ENCODE measurements at regions of chr9 and their contacts with region 1.

Region 1: DNA sequence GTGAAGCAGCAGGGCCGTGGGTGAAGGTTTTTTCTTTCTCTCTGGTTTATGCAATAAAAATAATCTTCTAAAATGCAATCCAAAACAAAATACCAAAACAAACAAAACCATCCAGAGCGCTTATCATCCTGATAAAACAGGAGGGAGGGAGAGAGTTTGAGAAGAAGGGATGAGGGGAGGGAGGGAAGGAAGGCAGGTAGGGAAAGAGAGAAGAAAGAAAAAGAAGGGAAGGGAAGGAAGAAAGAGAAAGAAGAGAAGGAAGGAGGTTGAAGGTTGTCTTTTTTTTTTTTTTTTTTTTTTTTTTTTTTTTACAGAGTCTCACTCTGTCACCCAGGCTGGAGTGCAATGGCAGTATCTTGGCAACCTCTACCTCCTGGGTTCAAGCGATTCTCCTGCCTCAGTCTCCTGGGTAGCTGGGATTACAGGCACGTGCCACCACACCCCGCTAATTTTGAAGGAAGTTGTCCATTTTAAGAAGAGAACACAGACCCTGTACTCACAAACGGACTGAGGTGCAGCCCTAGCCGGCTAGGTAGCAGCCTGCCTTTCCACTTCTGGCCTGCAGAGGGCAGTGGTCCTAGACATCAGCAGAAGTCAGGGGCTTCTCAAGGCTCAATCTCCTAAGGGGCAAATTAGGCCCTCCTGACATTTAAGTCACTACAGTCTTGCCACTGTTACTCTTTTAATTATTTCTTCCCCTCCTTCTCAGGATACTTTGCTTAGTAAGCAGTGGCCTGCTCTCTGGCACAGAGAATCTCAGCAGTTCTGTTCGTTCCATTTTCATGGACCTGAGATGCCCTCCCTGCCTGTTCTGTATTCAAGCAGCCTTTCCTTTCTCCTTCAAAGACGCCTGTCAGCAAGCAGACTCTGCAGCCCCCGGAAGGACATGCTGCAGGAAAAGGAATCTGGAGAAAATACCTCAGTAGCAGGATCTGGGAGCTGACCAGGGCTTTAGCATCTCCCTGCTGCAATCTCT is 76.4 kb downstream of the EPB41L4B start:
- H3K4me3 Mint-ChIP-seq: no peak overlapping the region
- H3K27ac Mint-ChIP-seq: no peak overlapping the region
- H3K4me1 Mint-ChIP-seq: no peaks in the 10 kb centered on the region
- H3K27me3 Mint-ChIP-seq: peaks cover 45% of the 10 kb centered on the region

Region 2: DNA sequence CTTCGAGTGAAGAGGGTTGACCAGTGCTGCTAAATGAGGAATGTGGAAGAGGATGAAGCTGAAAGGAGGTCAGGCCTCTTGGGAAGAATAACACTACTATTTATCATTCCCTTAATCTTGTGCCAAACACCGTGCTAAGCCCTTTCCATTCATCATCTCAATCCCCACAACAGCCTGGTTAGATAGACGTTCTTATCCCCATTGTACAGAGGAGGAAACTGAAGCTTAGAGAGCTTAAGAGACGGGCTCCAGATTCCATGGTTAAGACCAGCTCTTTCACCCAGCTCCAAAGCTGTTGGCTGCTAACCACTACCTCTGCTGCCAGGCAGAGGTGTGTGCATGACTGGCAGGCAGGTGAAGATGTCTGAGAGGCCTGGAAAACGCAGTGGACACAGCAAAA is 77.3 kb after region 1 on chr9:
- intact Hi-C with region 1: loop called (anchors 2 kb)
- H3K4me3 Mint-ChIP-seq: no peak overlapping the region
- H3K27ac Mint-ChIP-seq: no peak overlapping the region
- H3K4me1 Mint-ChIP-seq: peaks cover 13% of the 10 kb centered on the region
- H3K27me3 Mint-ChIP-seq: peaks cover 65% of the 10 kb centered on the region

Region 3: DNA sequence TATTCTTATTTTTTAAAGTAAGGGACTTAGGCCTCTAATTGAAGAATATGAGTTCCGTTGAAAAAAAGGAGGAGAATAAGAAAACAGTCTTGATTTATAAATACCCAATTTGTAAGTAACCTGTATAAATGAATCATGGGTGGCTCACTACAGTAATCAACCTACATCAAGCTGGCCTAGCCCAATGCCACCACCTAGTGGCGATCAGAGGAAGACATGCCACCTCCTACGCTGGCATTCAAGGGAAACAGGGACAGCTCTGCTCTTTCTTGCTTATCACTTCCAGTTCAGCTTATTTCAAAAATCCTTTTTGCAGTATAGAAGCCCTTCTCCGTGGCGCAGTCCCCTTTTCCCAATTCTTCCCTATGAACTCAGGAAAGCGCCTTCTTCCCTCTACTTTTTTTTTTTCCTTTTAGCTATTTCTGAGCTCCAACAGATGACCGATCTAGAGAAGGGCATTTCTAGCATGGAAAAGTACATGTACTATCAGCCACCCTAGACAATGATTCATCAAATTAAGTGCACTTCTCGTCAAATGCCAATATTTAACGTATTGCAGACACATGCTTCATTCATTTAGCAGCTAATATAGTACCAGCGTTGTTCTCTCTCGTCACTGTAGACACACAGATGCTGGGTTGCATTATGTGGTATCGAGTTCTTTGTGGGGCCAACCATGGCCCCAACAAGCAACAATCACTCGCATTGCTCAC is 225.4 kb after region 1 on chr9:
- intact Hi-C with region 1: loop called (anchors 2 kb)
- H3K4me3 Mint-ChIP-seq: no peak overlapping the region
- H3K27ac Mint-ChIP-seq: no peak overlapping the region
- H3K4me1 Mint-ChIP-seq: no peaks in the 10 kb centered on the region
- H3K27me3 Mint-ChIP-seq: peaks cover 69% of the 10 kb centered on the region

Region 4: DNA sequence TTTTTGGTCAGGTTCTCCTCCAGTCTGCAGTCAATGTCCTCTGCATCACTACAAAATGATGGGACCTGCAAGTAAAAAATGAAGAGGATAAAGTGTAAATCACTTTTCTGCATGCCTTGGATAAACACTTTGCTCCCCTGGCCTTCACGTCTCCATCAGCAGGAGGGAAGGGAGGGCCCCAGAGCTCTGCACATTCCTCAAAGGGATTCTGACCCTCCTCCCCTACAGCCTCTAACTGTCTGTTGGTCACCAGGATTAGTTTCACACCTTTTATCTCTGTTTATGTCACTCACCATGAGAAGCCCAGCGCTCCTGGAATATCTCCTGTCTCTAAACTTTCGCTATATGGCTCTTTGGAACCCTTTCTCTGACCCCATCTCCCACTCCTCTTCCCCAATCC is 1231.8 kb after region 1 on chr9:
- intact Hi-C with region 1: no loop called
- H3K4me3 Mint-ChIP-seq: no peak overlapping the region
- H3K27ac Mint-ChIP-seq: no peak overlapping the region
- H3K4me1 Mint-ChIP-seq: no peaks in the 10 kb centered on the region
- H3K27me3 Mint-ChIP-seq: no peaks in the 10 kb centered on the region